IMR-90 (cell line): ENCODE measurements at regions of chr12 and their contacts with region 1.

Region 1: GRCh38 chr12:18383203-18383602 is 121.9 kb downstream of the PIK3C2G start:
- DNase-seq: peak; percentile 89
- ATAC-seq: peak; percentile 78
- H3K4me3 ChIP-seq: no peak overlapping the region
- H3K27ac ChIP-seq: peak overlapping the region; percentile 75; the same call in 1 of the 2 replicates
- H3K4me1 ChIP-seq: peaks cover 5% of the 10 kb centered on the region
- H3K27me3 ChIP-seq: no peaks in the 10 kb centered on the region
- CTCF ChIP-seq: no peak
- POLR2A ChIP-seq: no peak
- RAD21 ChIP-seq: no peak

Region 2: GRCh38 chr12:18320036-18320617 is 63.1 kb before region 1 on chr12:
- CTCF ChIA-PET with region 1: no interaction called
- POLR2A ChIA-PET with region 1: no interaction called
- dilution Hi-C with region 1: no loop called
- in situ Hi-C with region 1: no loop called
- intact Hi-C with region 1: loop called (anchors 2 kb)
- DNase-seq: peak; percentile 69
- ATAC-seq: peak; percentile 89
- H3K4me3 ChIP-seq: no peak overlapping the region
- H3K27ac ChIP-seq: no peak overlapping the region
- H3K4me1 ChIP-seq: no peaks in the 10 kb centered on the region; the same call in 1 of the 2 replicates
- H3K27me3 ChIP-seq: no peaks in the 10 kb centered on the region
- CTCF ChIP-seq: peak; percentile 40
- POLR2A ChIP-seq: no peak
- RAD21 ChIP-seq: peak; percentile 39

Region 3: GRCh38 chr12:18422871-18423270 is 39.7 kb after region 1 on chr12:
- CTCF ChIA-PET with region 1: no interaction called
- POLR2A ChIA-PET with region 1: no interaction called
- dilution Hi-C with region 1: no loop called
- in situ Hi-C with region 1: no loop called
- intact Hi-C with region 1: loop called (anchors 5 kb)
- DNase-seq: peak; percentile 83
- ATAC-seq: peak; percentile 94
- H3K4me3 ChIP-seq: no peak overlapping the region
- H3K27ac ChIP-seq: no peak overlapping the region; the same call in 1 of the 2 replicates
- H3K4me1 ChIP-seq: peaks cover 7% of the 10 kb centered on the region
- H3K27me3 ChIP-seq: no peaks in the 10 kb centered on the region
- CTCF ChIP-seq: no peak
- POLR2A ChIP-seq: no peak
- RAD21 ChIP-seq: no peak